GM12878 (cell line): ENCODE measurements at regions of chr3 and their contacts with region 1.

Region 1: GRCh38 chr3:72310419-72311380 is 525.8 kb upstream of the PROK2 start:
- DNase-seq: peak; percentile 84
- ATAC-seq: peak; percentile 96
- H3K4me3 ChIP-seq: no peak overlapping the region
- H3K27ac ChIP-seq: no peak overlapping the region
- H3K4me1 ChIP-seq: peaks cover 19% of the 10 kb centered on the region
- H3K27me3 ChIP-seq: no peaks in the 10 kb centered on the region
- CTCF ChIP-seq: no peak
- EP300 ChIP-seq: no peak
- POLR2A ChIP-seq: peak; percentile 38; the same call in 1 of the 2 replicates
- RAD21 ChIP-seq: peak; percentile 3; the same call in 1 of the 2 replicates

Region 2: GRCh38 chr3:72193771-72194463 is 116.8 kb before region 1 on chr3:
- CTCF ChIA-PET with region 1: no interaction called
- POLR2A ChIA-PET with region 1: no interaction called
- RAD21 ChIA-PET with region 1: no interaction called
- SMC1A ChIA-PET with region 1: no interaction called
- in situ Hi-C with region 1: no loop called
- intact Hi-C with region 1: no loop called
- DNase-seq: no peak
- ATAC-seq: no peak
- H3K4me3 ChIP-seq: no peak overlapping the region
- H3K27ac ChIP-seq: no peak overlapping the region
- H3K4me1 ChIP-seq: no peaks in the 10 kb centered on the region
- H3K27me3 ChIP-seq: no peaks in the 10 kb centered on the region
- CTCF ChIP-seq: no peak
- EP300 ChIP-seq: no peak
- POLR2A ChIP-seq: no peak
- RAD21 ChIP-seq: no peak

Region 3: DNA sequence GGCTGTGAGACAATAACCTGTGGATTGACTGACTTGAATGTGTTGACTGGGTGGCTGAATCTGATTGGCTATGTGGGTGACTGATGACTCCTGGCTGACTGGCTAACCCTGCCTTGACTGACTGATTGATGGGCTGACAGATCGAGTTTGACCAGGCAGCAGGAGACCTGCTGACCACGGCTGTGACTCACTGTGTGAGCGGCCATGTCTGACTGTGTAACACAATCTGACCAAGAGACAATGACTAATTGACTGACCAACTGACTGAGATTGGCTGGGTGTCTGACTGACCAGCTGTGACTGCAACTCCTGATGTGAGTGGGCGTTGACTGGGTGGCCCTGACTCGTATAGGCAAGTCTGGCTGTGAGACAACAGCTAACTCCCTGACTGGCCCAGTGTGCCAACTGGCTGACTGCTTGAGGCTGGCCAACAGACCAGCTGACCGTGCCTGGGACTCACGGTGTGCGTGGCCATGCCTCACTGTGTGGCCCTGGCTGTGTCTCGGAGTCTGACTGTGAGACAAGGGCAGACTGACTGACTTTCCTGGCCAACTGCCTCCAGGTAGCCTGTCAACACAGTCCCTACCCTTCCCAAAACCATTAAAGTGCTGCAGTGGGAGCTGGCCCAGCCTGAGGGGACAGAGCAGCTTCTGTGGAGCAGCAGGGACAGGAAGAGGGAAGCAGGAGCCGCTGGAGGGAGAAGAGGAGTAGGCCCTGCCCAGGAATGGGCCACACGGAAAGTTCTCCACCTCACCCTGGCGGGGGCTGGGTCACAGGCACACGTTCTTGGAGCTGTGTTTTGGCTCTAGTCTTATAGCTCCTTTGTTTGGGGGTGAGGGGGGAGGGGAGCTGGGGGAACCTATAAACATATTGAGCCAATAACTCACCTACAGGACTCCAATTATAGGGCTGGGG is 28.7 kb after region 1 on chr3:
- CTCF ChIA-PET with region 1: no interaction called
- POLR2A ChIA-PET with region 1: no interaction called
- RAD21 ChIA-PET with region 1: interaction called, 8 read pairs
- SMC1A ChIA-PET with region 1: interaction called, 26 read pairs
- in situ Hi-C with region 1: no loop called
- intact Hi-C with region 1: no loop called
- DNase-seq: peak; percentile 15
- ATAC-seq: peak; percentile 69
- H3K4me3 ChIP-seq: no peak overlapping the region
- H3K27ac ChIP-seq: no peak overlapping the region
- H3K4me1 ChIP-seq: peaks cover 7% of the 10 kb centered on the region
- H3K27me3 ChIP-seq: no peaks in the 10 kb centered on the region; a peak in 1 of 4 replicates
- CTCF ChIP-seq: no peak
- EP300 ChIP-seq: no peak
- POLR2A ChIP-seq: no peak
- RAD21 ChIP-seq: no peak